GM12878 (cell line): ENCODE measurements at regions of chr9 and their contacts with region 1.

Region 1: GRCh38 chr9:134858051-134858841 is 22.4 kb upstream of the FCN2 start:
- DNase-seq: peak; percentile 76
- ATAC-seq: peak; percentile 95
- H3K4me3 ChIP-seq: peak overlapping the region; percentile 42; the same call in 1 of the 2 replicates
- H3K27ac ChIP-seq: peak overlapping the region; percentile 94
- H3K4me1 ChIP-seq: peaks cover 19% of the 10 kb centered on the region
- H3K27me3 ChIP-seq: no peaks in the 10 kb centered on the region
- CTCF ChIP-seq: peak; percentile 54 to 64 (median 57); a peak in 5 of 6 replicates
- EP300 ChIP-seq: peak; percentile 73 to 80
- POLR2A ChIP-seq: peak; percentile 50
- RAD21 ChIP-seq: peak; percentile 68

Region 2: DNA sequence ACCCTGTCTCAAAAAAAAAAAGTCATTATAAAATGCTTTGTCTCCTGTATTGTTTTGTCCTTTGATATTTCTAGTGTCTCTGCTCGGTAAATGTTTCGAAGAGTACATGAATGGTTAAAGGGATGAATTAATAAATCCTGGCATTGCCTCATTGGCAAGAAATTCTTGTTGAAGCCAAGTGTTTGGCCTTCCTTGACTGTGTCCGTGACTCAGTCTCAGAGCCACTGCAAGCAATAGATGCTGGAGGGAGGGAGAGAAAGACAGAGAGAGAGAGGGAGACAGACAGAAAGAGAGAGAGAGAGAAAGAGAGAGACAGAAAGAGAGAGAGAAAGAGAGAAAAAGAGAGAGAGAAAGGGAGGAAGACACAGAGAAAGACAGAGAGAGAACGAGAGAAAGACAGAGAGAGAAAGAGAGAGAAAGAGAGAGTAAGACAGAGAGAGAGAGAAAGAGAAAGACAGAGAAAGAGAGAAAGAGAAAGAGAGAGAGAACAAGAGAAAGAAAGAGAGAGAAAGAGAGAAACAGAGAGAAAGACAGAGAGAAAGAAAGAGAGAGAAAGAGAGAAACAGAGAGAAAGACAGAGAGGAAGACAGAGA is 604.5 kb before region 1 on chr9:
- CTCF ChIA-PET with region 1: no interaction called
- POLR2A ChIA-PET with region 1: no interaction called
- RAD21 ChIA-PET with region 1: no interaction called
- SMC1A ChIA-PET with region 1: no interaction called
- in situ Hi-C with region 1: no loop called
- intact Hi-C with region 1: no loop called
- DNase-seq: no peak
- ATAC-seq: no peak
- H3K4me3 ChIP-seq: no peak overlapping the region
- H3K27ac ChIP-seq: no peak overlapping the region
- H3K4me1 ChIP-seq: no peaks in the 10 kb centered on the region
- H3K27me3 ChIP-seq: no peaks in the 10 kb centered on the region
- CTCF ChIP-seq: no peak
- EP300 ChIP-seq: no peak
- POLR2A ChIP-seq: no peak
- RAD21 ChIP-seq: no peak

Region 3: DNA sequence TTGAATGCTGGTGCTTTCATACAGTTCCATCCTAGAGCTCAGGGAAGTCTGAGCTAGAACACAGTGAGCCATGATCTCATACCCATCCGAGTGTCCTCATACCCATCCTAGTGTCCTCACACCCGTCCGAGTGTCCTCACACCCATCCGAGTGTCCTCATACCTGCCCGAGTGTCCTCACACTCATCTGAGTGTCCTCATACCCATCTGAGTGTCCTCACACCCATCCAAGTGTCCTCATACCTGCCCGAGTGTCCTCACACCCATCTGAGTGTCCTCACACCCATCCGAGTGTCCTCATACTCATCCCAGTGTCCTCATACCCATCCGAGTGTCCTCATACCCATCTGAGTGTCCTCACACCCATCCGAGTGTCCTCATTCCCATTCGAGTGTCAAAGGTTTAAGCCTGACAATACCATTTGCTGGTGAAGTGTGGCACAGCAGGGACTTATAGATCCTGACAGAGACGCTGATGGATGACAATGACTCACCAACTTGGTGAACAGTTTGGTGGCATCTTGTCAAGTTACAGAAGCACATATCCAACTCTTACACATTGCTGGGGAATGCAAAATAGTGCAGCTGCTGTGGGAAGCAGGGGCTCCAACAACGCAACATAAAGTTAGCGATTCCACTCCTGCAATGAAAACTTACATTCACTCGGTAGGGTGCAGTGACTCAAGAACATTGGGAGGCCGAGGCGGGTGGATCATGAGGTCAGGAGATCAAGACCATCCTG is 293.6 kb before region 1 on chr9:
- CTCF ChIA-PET with region 1: no interaction called
- POLR2A ChIA-PET with region 1: no interaction called
- RAD21 ChIA-PET with region 1: no interaction called
- SMC1A ChIA-PET with region 1: no interaction called
- in situ Hi-C with region 1: no loop called
- intact Hi-C with region 1: no loop called
- DNase-seq: no peak
- ATAC-seq: no peak
- H3K4me3 ChIP-seq: no peak overlapping the region
- H3K27ac ChIP-seq: no peak overlapping the region
- H3K4me1 ChIP-seq: no peaks in the 10 kb centered on the region
- H3K27me3 ChIP-seq: peaks cover 0 to 2% of the 10 kb centered on the region in 2 experiments; a peak in 2 of 4 replicates
- CTCF ChIP-seq: no peak
- EP300 ChIP-seq: no peak
- POLR2A ChIP-seq: no peak
- RAD21 ChIP-seq: no peak

Region 4: GRCh38 chr9:134778841-134779411 is 79.3 kb before region 1 on chr9:
- CTCF ChIA-PET with region 1: interaction called, 18 read pairs
- POLR2A ChIA-PET with region 1: no interaction called
- RAD21 ChIA-PET with region 1: interaction called, 6 read pairs
- SMC1A ChIA-PET with region 1: interaction called, 9 read pairs
- in situ Hi-C with region 1: no loop called
- intact Hi-C with region 1: no loop called
- DNase-seq: no peak
- ATAC-seq: peak; percentile 77
- H3K4me3 ChIP-seq: no peak overlapping the region
- H3K27ac ChIP-seq: no peak overlapping the region
- H3K4me1 ChIP-seq: peaks cover 6% of the 10 kb centered on the region; the same call in 1 of the 2 replicates
- H3K27me3 ChIP-seq: no peaks in the 10 kb centered on the region; a peak in 1 of 4 replicates
- CTCF ChIP-seq: peak; percentile 45 to 64 (median 53)
- EP300 ChIP-seq: no peak
- POLR2A ChIP-seq: no peak
- RAD21 ChIP-seq: no peak

Region 5: DNA sequence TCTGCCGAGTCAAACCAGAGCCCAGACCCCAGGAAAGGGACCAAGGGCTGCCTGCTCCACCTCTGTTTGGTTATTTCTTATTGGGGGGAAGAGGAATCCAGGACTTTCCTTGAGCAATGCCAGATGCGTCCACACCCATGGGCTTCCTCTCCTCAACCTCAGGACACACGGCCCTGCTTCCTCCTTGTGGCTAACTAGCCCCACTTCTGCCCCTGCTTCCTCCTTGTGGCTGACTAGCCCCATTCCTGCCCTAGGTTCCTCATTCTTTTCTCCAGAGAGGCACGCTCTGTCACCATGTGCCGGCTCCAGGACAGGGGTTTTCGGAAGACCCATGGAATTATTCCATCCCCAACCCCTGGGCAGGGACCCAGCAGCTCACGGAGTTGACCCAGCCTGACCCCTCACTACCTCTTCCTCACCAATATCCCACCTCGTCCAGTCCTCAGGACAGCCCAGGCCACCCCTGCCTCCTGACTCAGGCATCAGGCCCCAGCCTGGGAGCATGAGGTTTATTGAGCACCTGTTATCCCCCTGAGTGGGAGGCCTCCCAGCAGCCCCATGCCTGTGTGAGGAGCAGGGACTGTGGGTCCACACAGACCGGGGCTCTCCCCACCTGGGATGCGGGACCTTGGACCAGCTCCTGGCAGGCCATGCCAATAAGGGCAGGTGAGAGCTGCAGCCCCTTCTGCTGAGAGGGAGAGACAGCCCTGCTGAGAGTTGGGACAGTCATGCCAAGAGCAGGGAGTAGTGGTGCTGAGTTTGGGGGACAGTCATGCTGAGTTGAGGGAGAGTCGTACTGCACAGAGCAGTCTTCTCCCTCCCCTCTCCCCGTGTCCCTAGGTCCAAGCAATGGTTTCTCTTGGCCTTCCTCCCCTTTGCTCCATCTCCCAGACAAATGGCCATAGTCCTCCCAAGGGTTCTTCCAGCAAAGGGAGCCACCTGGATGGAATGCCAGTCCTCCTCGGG is 71.2 kb after region 1 on chr9:
- CTCF ChIA-PET with region 1: interaction called, 4 read pairs
- POLR2A ChIA-PET with region 1: interaction called, 3 read pairs
- RAD21 ChIA-PET with region 1: interaction called, 7 read pairs
- SMC1A ChIA-PET with region 1: interaction called, 15 read pairs
- in situ Hi-C with region 1: no loop called
- intact Hi-C with region 1: no loop called
- DNase-seq: no peak
- ATAC-seq: no peak
- H3K4me3 ChIP-seq: peak overlapping the region; percentile 38; the same call in 1 of the 2 replicates
- H3K27ac ChIP-seq: peak overlapping the region; percentile 51
- H3K4me1 ChIP-seq: peaks cover 63% of the 10 kb centered on the region
- H3K27me3 ChIP-seq: no peaks in the 10 kb centered on the region
- CTCF ChIP-seq: no peak
- EP300 ChIP-seq: no peak
- POLR2A ChIP-seq: no peak
- RAD21 ChIP-seq: no peak

Region 6: GRCh38 chr9:134936346-134937163 is 78.3 kb after region 1 on chr9:
- CTCF ChIA-PET with region 1: interaction called, 5 read pairs
- POLR2A ChIA-PET with region 1: interaction called, 3 read pairs
- RAD21 ChIA-PET with region 1: interaction called, 8 read pairs
- SMC1A ChIA-PET with region 1: interaction called, 15 read pairs
- in situ Hi-C with region 1: no loop called
- intact Hi-C with region 1: no loop called
- DNase-seq: peak; percentile 87
- ATAC-seq: peak; percentile 83
- H3K4me3 ChIP-seq: peak overlapping the region; percentile 58; the same call in 1 of the 2 replicates
- H3K27ac ChIP-seq: peak overlapping the region; percentile 90
- H3K4me1 ChIP-seq: peaks cover 59% of the 10 kb centered on the region
- H3K27me3 ChIP-seq: no peaks in the 10 kb centered on the region; a peak in 1 of 4 replicates
- CTCF ChIP-seq: no peak
- EP300 ChIP-seq: peak; percentile 50 to 69; a peak in 1 of 4 replicates
- POLR2A ChIP-seq: peak; percentile 36; the same call in 1 of the 2 replicates
- RAD21 ChIP-seq: no peak

Region 7: GRCh38 chr9:134983074-134983473 is 124.8 kb after region 1 on chr9:
- CTCF ChIA-PET with region 1: interaction called, 4 read pairs
- POLR2A ChIA-PET with region 1: no interaction called
- RAD21 ChIA-PET with region 1: no interaction called
- SMC1A ChIA-PET with region 1: no interaction called
- in situ Hi-C with region 1: no loop called
- intact Hi-C with region 1: loop called (anchors 5 kb)
- DNase-seq: peak; percentile 2
- ATAC-seq: peak; percentile 54
- H3K4me3 ChIP-seq: no peak overlapping the region
- H3K27ac ChIP-seq: no peak overlapping the region
- H3K4me1 ChIP-seq: no peaks in the 10 kb centered on the region
- H3K27me3 ChIP-seq: no peaks in the 10 kb centered on the region
- CTCF ChIP-seq: peak; percentile 55 to 73 (median 65); a peak in 5 of 6 replicates
- EP300 ChIP-seq: no peak
- POLR2A ChIP-seq: no peak
- RAD21 ChIP-seq: peak; percentile 71

Region 8: DNA sequence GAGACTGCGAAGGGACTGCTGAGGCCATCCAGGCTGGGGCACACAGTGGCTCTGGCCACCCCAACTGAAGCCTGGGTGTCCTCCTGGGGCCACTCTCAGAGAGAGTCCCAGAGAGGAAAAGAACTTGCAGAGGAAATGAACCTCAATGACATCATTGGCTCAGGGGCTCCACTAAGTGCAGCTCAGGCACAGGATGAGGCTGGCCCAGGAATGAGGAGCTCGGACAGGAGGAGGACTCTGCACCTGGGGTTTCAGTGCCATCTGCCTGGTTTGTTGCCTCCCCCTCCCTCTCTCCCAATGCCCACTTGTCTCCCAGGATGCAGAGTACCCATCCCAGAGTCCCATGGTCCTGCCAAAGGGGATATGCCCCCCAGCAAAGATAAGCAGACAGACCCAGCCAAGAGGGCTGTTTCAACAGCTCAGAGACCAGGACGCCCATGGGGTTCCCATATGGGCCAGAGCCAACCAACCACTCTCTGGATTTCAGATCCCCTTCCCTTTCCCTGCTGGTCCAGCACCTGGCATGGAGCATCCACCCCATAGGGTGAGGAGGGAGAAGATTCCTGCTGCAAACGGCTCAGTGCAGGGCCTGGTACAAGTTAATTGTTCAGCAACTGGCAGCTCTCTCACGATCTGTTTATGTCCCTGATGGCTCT is 202.3 kb after region 1 on chr9:
- CTCF ChIA-PET with region 1: no interaction called
- POLR2A ChIA-PET with region 1: no interaction called
- RAD21 ChIA-PET with region 1: no interaction called
- SMC1A ChIA-PET with region 1: no interaction called
- in situ Hi-C with region 1: no loop called
- intact Hi-C with region 1: no loop called
- DNase-seq: no peak
- ATAC-seq: no peak
- H3K4me3 ChIP-seq: no peak overlapping the region
- H3K27ac ChIP-seq: no peak overlapping the region
- H3K4me1 ChIP-seq: no peaks in the 10 kb centered on the region
- H3K27me3 ChIP-seq: no peaks in the 10 kb centered on the region
- CTCF ChIP-seq: no peak
- EP300 ChIP-seq: no peak
- POLR2A ChIP-seq: no peak
- RAD21 ChIP-seq: no peak